B cell (primary cell): ENCODE measurements at regions of chr16 and their contacts with region 1.

Region 1: GRCh38 chr16:68040507-68041288 is 17.6 kb downstream of the DUS2 start:
- DNase-seq: peak; percentile 90
- ATAC-seq: peak; percentile 82
- H3K4me3 ChIP-seq: peak overlapping the region in 4 of 5 experiments; percentile 34 to 79 (median 52)
- H3K4me3 Mint-ChIP-seq: peak overlapping the region; percentile 85
- H3K27ac ChIP-seq: peak overlapping the region; percentile 14 to 82
- H3K27ac Mint-ChIP-seq: peak overlapping the region; percentile 94
- H3K4me1 ChIP-seq: peaks cover 46 to 56% of the 10 kb centered on the region in 2 donors
- H3K4me1 Mint-ChIP-seq: peaks cover 51% of the 10 kb centered on the region
- H3K27me3 ChIP-seq: no peaks in the 10 kb centered on the region
- H3K27me3 Mint-ChIP-seq: no peaks in the 10 kb centered on the region
- CTCF ChIP-seq: peak; percentile 84

Region 2: DNA sequence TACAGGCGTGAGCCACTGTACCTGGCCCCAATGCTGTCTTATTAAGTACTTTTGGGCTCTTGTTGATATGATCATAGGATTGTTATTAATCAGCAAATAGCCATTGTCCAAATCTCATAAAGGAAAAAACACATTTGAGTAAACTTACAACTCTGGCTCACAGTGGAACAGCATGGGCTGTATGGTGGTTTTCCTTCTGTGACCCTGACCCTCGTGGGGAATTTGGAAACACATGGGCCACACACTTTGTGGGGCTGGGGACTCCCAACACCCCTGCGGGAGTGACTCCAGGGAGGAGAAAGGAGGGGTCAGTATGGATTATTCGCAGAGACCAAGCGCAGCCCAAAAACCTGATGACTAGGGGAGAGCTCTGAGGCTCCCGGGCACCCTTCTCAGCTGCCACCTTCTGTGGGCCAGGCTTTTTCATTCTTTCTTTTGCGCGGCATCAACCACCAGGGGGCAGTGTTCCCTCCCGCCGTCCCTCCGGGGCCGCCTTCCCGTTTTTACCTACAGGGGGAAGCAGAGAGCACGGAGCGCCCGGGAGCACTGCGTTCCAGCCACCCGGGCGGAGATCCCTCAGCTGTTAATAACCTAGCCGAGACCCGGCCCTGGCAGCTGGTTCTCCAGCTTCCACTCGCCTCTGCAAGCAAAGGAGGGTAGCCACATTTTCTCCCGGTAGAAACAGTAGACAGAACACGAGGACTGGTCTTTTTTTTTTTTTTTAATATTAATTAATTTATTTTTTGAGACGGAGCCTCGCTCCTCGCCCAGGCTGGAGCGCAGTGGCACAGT is 224.3 kb before region 1 on chr16:
- CTCF ChIA-PET with region 1: interaction called, 27 read pairs
- POLR2A ChIA-PET with region 1: no interaction called
- intact Hi-C with region 1: loop called (anchors 1 kb)
- DNase-seq: peak; percentile 92
- ATAC-seq: peak; percentile 99
- H3K4me3 ChIP-seq: no peak overlapping the region
- H3K4me3 Mint-ChIP-seq: peak overlapping the region; percentile 65
- H3K27ac ChIP-seq: no peak overlapping the region
- H3K27ac Mint-ChIP-seq: peak overlapping the region; percentile 59
- H3K4me1 ChIP-seq: peaks cover 0 to 7% of the 10 kb centered on the region in 2 donors
- H3K4me1 Mint-ChIP-seq: peaks cover 6% of the 10 kb centered on the region
- H3K27me3 ChIP-seq: no peaks in the 10 kb centered on the region
- H3K27me3 Mint-ChIP-seq: no peaks in the 10 kb centered on the region
- CTCF ChIP-seq: peak; percentile 100

Region 3: GRCh38 chr16:67993189-67994039 is 47.3 kb before region 1 on chr16:
- CTCF ChIA-PET with region 1: interaction called, 320 read pairs
- POLR2A ChIA-PET with region 1: interaction called, 23 read pairs
- intact Hi-C with region 1: loop called (anchors 1 kb)
- DNase-seq: peak; percentile 92
- ATAC-seq: peak; percentile 87
- H3K4me3 ChIP-seq: peak overlapping the region; percentile 26 to 40 (median 31)
- H3K4me3 Mint-ChIP-seq: peak overlapping the region; percentile 82
- H3K27ac ChIP-seq: peak overlapping the region; percentile 86 to 89
- H3K27ac Mint-ChIP-seq: peak overlapping the region; percentile 99
- H3K4me1 ChIP-seq: peaks cover 49 to 60% of the 10 kb centered on the region in 2 donors
- H3K4me1 Mint-ChIP-seq: peaks cover 67% of the 10 kb centered on the region
- H3K27me3 ChIP-seq: no peaks in the 10 kb centered on the region
- H3K27me3 Mint-ChIP-seq: no peaks in the 10 kb centered on the region
- CTCF ChIP-seq: peak; percentile 96

Region 4: GRCh38 chr16:68022704-68023522 is 17.8 kb before region 1 on chr16 and contains the starts of genes DDX28 and DUS2:
- CTCF ChIA-PET with region 1: interaction called, 17 read pairs
- POLR2A ChIA-PET with region 1: interaction called, 22 read pairs
- intact Hi-C with region 1: loop called (anchors 1 kb)
- DNase-seq: peak; percentile 96
- ATAC-seq: peak; percentile 94
- H3K4me3 ChIP-seq: peak within 1 kb of the TSS; percentile 74 to 98 (median 90)
- H3K4me3 Mint-ChIP-seq: peak within 1 kb of the TSS; percentile 96
- H3K27ac ChIP-seq: peak within 1 kb of the TSS; percentile 72 to 79
- H3K27ac Mint-ChIP-seq: peak within 1 kb of the TSS; percentile 99
- H3K4me1 ChIP-seq: peaks cover 23 to 26% of the 10 kb centered on the region in 2 donors
- H3K4me1 Mint-ChIP-seq: peaks cover 27% of the 10 kb centered on the region
- H3K27me3 ChIP-seq: no peaks in the 10 kb centered on the region
- H3K27me3 Mint-ChIP-seq: no peaks in the 10 kb centered on the region
- CTCF ChIP-seq: no peak
- total RNA-seq, gene DDX28: 19.2 and 20.2 TPM in 2 replicates
- total RNA-seq, gene DUS2: 61.1 and 69.1 TPM in 2 replicates

Region 5: DNA sequence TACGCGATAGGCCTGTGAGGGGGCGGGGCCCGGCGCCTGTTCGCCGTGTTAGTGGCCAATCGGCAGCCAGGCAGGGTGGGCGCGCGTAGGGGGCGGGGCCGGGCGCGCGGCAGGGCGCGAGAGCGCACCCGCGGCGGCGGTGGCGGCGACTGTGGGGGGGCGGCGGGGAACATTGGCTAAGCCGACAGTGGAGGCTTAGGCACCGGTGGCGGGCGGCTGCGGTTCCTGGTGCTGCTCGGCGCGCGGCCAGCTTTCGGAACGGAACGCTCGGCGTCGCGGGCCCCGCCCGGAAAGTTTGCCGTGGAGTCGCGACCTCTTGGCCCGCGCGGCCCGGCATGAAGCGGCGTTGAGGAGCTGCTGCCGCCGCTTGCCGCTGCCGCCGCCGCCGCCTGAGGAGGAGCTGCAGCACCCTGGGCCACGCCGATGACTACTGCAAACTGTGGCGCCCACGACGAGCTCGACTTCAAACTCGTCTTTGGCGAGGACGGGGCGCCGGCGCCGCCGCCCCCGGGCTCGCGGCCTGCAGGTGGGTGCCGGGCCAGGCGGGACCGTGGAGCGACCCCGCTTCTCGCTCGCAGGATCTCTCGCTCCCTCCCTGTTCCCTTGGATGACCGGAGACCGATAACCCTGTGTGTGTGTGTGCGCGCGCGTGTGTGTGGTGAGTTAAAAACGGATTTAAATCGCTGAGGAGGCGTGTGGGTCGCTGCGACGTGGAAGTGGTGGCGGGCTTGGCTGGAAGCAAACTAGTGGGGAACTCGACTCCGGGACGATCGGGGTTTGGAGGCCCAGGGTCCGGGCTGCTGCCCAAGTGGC is 44.8 kb after region 1 on chr16 and contains the start of gene NFATC3:
- CTCF ChIA-PET with region 1: interaction called, 17 read pairs
- POLR2A ChIA-PET with region 1: interaction called, 4 read pairs
- intact Hi-C with region 1: no loop called
- DNase-seq: peak; percentile 99
- ATAC-seq: peak; percentile 76
- H3K4me3 ChIP-seq: peak within 1 kb of the TSS; percentile 90 to 97 (median 94)
- H3K4me3 Mint-ChIP-seq: peak within 1 kb of the TSS; percentile 86
- H3K27ac ChIP-seq: peak within 1 kb of the TSS; percentile 81 to 93
- H3K27ac Mint-ChIP-seq: peak within 1 kb of the TSS; percentile 96
- H3K4me1 ChIP-seq: peaks cover 57 to 73% of the 10 kb centered on the region in 2 donors
- H3K4me1 Mint-ChIP-seq: peaks cover 68% of the 10 kb centered on the region
- H3K27me3 ChIP-seq: no peaks in the 10 kb centered on the region
- H3K27me3 Mint-ChIP-seq: no peaks in the 10 kb centered on the region
- CTCF ChIP-seq: no peak
- total RNA-seq, gene NFATC3: 115 TPM in 2 replicates